Naive thymus-derived CD4-positive, alpha-beta T cell (primary cell): ENCODE measurements at regions of chr4 and their contacts with region 1.

Region 1: GRCh38 chr4:13654158-13654797 is 26.8 kb upstream of the BOD1L1 start:
- DNase-seq: peak; percentile 46 to 84 (median 69)
- ATAC-seq: peak; percentile 97
- H3K4me3 ChIP-seq: peak overlapping the region; percentile 77
- H3K4me3 Mint-ChIP-seq: peak overlapping the region; percentile 77 to 93 (median 90)
- H3K27ac ChIP-seq: no peak overlapping the region
- H3K27ac Mint-ChIP-seq: peak overlapping the region in 5 of 9 donors; percentile 25 to 70 (median 30)
- H3K4me1 ChIP-seq: no peaks in the 10 kb centered on the region
- H3K4me1 Mint-ChIP-seq: peaks cover 12 to 22% (median 16%) of the 10 kb centered on the region in 7 donors
- H3K27me3 ChIP-seq: no peaks in the 10 kb centered on the region
- H3K27me3 Mint-ChIP-seq: peaks cover 0 to 12% (median 4%) of the 10 kb centered on the region in 5 donors

Region 2: DNA sequence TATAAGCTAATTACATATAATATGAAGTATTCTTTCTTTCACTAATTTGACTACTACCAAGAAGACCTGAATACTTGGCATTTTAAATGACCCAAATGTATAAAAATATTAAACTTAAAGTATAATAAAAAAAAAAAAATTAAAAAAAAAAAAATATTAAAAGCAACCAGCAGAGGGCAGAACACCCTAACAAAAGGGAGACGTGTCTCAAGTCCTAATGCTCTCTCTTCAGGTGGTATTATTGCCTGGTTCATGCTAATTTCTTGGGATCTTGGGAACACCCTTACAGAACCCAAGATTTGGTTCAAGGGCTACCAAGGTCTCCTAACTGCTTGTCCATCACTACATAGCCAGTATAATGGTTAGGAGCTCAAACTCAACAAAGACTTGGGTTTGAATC is 924.9 kb before region 1 on chr4:
- CTCF ChIA-PET with region 1: no interaction called
- POLR2A ChIA-PET with region 1: no interaction called
- intact Hi-C with region 1: loop called in 1 of 2 experiments (anchors 10 kb)
- DNase-seq: peak in 1 of 9 donors; percentile 9
- ATAC-seq: no peak
- H3K4me3 ChIP-seq: no peak overlapping the region
- H3K4me3 Mint-ChIP-seq: no peak overlapping the region
- H3K27ac ChIP-seq: no peak overlapping the region
- H3K27ac Mint-ChIP-seq: no peak overlapping the region
- H3K4me1 ChIP-seq: no peaks in the 10 kb centered on the region
- H3K4me1 Mint-ChIP-seq: no peaks in the 10 kb centered on the region
- H3K27me3 ChIP-seq: peaks cover 0 to 3% of the 10 kb centered on the region in 2 donors
- H3K27me3 Mint-ChIP-seq: peaks cover 0 to 35% (median 24%) of the 10 kb centered on the region in 5 donors

Region 3: DNA sequence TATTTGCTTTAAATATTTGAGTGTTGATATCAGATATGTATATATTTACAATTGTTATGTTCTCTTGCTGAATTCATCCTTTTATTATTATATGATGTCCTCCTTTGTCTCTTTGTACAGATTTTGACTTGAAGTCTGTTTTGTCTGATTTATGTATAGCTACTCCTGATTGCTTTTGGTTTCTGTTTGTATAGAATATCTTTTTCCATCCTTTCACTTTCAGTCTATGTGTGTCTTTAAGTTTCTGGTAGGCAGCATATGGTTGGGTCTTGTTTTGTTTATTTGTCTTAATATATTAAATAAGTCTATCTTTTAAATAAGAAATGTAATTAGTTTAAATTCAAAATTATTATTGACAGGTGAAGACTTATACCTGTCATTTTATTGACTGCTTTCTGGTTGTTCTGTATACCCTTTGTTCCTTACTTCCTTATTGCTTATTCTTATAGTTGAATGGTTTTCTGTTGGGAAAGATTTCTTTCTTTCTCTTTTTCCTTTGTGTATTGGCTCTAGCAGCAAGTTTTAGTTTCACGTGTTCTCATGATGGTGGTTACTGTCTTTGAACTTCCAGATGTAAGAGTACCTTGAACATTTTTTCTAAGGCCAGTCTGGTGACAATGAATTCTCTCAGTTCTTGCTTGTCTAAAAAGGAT is 201.2 kb before region 1 on chr4:
- CTCF ChIA-PET with region 1: no interaction called
- POLR2A ChIA-PET with region 1: no interaction called
- intact Hi-C with region 1: no loop called
- DNase-seq: no peak
- ATAC-seq: no peak
- H3K4me3 ChIP-seq: no peak overlapping the region
- H3K4me3 Mint-ChIP-seq: peak overlapping the region in 7 of 10 donors; percentile 10 to 73 (median 39)
- H3K27ac ChIP-seq: no peak overlapping the region
- H3K27ac Mint-ChIP-seq: peak overlapping the region in 3 of 9 donors; percentile 12 to 89 (median 25)
- H3K4me1 ChIP-seq: no peaks in the 10 kb centered on the region
- H3K4me1 Mint-ChIP-seq: peaks cover 11 to 18% (median 16%) of the 10 kb centered on the region in 7 donors
- H3K27me3 ChIP-seq: no peaks in the 10 kb centered on the region
- H3K27me3 Mint-ChIP-seq: no peaks in the 10 kb centered on the region

Region 4: DNA sequence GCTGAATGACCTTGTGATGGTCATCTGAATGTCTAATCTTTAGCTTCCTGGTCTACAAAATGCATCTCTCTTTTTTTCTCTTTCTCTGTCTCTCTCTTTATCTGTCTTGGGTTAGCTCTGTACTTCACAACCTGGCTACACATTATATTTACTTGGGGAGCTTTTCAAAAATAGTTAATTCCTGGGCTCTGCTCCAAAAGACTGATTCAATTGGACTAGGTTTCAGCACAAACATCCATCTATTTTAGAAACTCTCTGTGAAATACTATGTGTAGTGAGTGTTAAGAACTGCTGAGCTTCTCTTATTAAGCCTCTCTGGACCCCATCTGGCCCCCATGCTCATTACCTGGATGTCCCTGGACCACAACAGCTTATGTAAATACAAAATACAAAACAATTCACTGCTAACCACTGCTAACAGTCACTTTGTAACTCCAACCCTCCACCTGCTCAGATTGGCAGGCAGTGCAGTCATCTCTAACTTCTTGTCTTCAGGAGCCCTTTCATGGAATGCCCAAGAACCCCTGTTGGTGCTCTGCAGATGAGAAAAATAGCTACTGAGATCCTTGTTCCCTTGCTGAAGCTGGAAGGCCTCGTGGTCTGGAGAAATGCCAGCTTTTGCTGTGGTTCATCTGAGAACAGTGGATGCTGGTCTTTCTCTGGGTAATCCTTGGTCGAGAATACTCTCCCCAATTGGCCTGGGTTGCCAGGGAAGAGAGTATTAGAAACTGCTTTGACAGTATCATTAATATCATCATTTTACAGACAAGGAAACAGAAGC is 11.9 kb before region 1 on chr4:
- CTCF ChIA-PET with region 1: interaction called, 16 read pairs
- POLR2A ChIA-PET with region 1: no interaction called
- intact Hi-C with region 1: no loop called
- DNase-seq: no peak
- ATAC-seq: no peak
- H3K4me3 ChIP-seq: no peak overlapping the region
- H3K4me3 Mint-ChIP-seq: no peak overlapping the region
- H3K27ac ChIP-seq: no peak overlapping the region
- H3K27ac Mint-ChIP-seq: no peak overlapping the region
- H3K4me1 ChIP-seq: no peaks in the 10 kb centered on the region
- H3K4me1 Mint-ChIP-seq: peaks cover 0 to 7% (median 5%) of the 10 kb centered on the region in 7 donors
- H3K27me3 ChIP-seq: peaks cover 0 to 5% of the 10 kb centered on the region in 2 donors
- H3K27me3 Mint-ChIP-seq: peaks cover 30 to 69% (median 58%) of the 10 kb centered on the region in 5 donors

Region 5: DNA sequence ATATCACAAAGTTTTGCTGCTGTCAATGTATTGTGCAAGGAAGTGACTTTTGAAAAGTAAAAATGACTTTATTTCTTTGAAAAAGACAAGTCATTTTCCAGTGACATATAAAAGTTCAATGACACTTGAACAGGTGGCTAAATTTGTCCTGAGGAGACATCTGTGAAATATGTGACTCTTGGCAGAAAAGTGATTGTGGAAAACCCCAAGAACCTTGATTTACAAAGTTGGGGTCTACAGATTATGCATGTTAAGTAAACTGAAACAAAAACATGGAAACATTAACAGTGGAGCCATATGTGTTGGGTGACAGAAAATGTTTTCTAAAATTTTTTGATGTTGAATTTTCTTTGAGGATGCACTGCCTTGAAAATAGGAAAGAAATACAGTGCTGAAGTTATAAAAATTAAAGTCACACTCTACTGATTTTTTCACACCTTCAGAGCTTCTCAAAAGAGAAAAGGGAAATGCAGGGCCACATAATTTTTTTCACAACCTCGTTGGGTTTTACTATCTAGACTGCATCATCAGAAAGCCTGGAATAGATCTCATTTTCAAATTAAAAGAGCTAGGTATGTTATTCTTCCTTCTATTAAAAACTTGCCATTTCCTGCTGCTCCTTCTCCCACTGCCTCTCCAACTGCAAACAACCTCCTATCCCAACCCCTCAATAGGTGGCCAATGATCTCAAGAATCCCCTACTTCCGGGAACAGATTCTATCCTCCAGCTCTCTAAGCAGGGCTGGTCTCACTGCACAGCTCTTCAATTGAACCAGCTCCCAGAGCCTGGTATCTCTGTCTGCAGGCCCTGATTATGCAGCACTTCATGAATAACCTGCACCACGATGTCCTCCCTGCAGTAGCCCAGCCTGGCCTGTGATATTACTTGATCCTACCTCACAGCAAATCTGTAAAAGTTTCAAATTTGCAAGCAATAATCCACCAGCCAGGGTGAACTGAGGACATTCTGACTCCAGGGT is 777.2 kb after region 1 on chr4:
- CTCF ChIA-PET with region 1: no interaction called
- POLR2A ChIA-PET with region 1: no interaction called
- intact Hi-C with region 1: loop called in 1 of 2 experiments (anchors 10 kb)
- DNase-seq: no peak
- ATAC-seq: no peak
- H3K4me3 ChIP-seq: no peak overlapping the region
- H3K4me3 Mint-ChIP-seq: no peak overlapping the region
- H3K27ac ChIP-seq: no peak overlapping the region
- H3K27ac Mint-ChIP-seq: peak overlapping the region in 1 of 9 donors; percentile 22
- H3K4me1 ChIP-seq: no peaks in the 10 kb centered on the region
- H3K4me1 Mint-ChIP-seq: peaks cover 0 to 3% (median 0%) of the 10 kb centered on the region in 7 donors
- H3K27me3 ChIP-seq: no peaks in the 10 kb centered on the region
- H3K27me3 Mint-ChIP-seq: peaks cover 0 to 25% (median 7%) of the 10 kb centered on the region in 5 donors

Region 6: GRCh38 chr4:14920759-14921320 is 1266.6 kb after region 1 on chr4:
- CTCF ChIA-PET with region 1: no interaction called
- POLR2A ChIA-PET with region 1: no interaction called
- intact Hi-C with region 1: loop called (anchors 2 to 10 kb)
- DNase-seq: peak in 5 of 9 donors; percentile 12 to 62 (median 37)
- ATAC-seq: no peak
- H3K4me3 ChIP-seq: no peak overlapping the region
- H3K4me3 Mint-ChIP-seq: no peak overlapping the region
- H3K27ac ChIP-seq: no peak overlapping the region
- H3K27ac Mint-ChIP-seq: no peak overlapping the region
- H3K4me1 ChIP-seq: no peaks in the 10 kb centered on the region
- H3K4me1 Mint-ChIP-seq: peaks cover 0 to under 1% (median 0%) of the 10 kb centered on the region in 7 donors
- H3K27me3 ChIP-seq: no peaks in the 10 kb centered on the region
- H3K27me3 Mint-ChIP-seq: peaks cover 0 to 17% (median 11%) of the 10 kb centered on the region in 5 donors

Region 7: GRCh38 chr4:15231265-15232091 is 1577.2 kb after region 1 on chr4:
- CTCF ChIA-PET with region 1: no interaction called
- POLR2A ChIA-PET with region 1: no interaction called
- intact Hi-C with region 1: loop called in 1 of 2 experiments (anchors 10 kb)
- DNase-seq: peak; percentile 45 to 72 (median 69)
- ATAC-seq: peak; percentile 86
- H3K4me3 ChIP-seq: no peak overlapping the region
- H3K4me3 Mint-ChIP-seq: no peak overlapping the region
- H3K27ac ChIP-seq: no peak overlapping the region
- H3K27ac Mint-ChIP-seq: peak overlapping the region in 4 of 9 donors; percentile 11 to 68 (median 44)
- H3K4me1 ChIP-seq: peaks cover 0 to 27% of the 10 kb centered on the region in 2 donors
- H3K4me1 Mint-ChIP-seq: peaks cover 24 to 39% (median 35%) of the 10 kb centered on the region in 7 donors
- H3K27me3 ChIP-seq: no peaks in the 10 kb centered on the region
- H3K27me3 Mint-ChIP-seq: peaks cover 0 to 3% (median 0%) of the 10 kb centered on the region in 5 donors

Region 8: GRCh38 chr4:15457406-15458201 is 1803.3 kb after region 1 on chr4:
- CTCF ChIA-PET with region 1: no interaction called
- POLR2A ChIA-PET with region 1: no interaction called
- intact Hi-C with region 1: loop called (anchors 1 to 5 kb)
- DNase-seq: peak in 6 of 9 donors; percentile 23 to 62 (median 56)
- ATAC-seq: peak; percentile 89
- H3K4me3 ChIP-seq: no peak overlapping the region
- H3K4me3 Mint-ChIP-seq: peak overlapping the region in 2 of 10 donors; percentile 3 to 17
- H3K27ac ChIP-seq: no peak overlapping the region
- H3K27ac Mint-ChIP-seq: peak overlapping the region in 3 of 9 donors; percentile 6 to 59 (median 14)
- H3K4me1 ChIP-seq: no peaks in the 10 kb centered on the region
- H3K4me1 Mint-ChIP-seq: peaks cover 0 to 12% (median 7%) of the 10 kb centered on the region in 7 donors
- H3K27me3 ChIP-seq: no peaks in the 10 kb centered on the region
- H3K27me3 Mint-ChIP-seq: peaks cover 0 to 25% (median 0%) of the 10 kb centered on the region in 5 donors